A549 (cell line): ENCODE measurements at regions of chr19 and their contacts with region 1.

Region 1: GRCh38 chr19:4831304-4831978 is at the start of gene TICAM1:
- DNase-seq: peak; percentile 48 to 58
- ATAC-seq: peak; percentile 87 to 90
- H3K4me3 ChIP-seq: peak within 1 kb of the TSS; percentile 81
- H3K27ac ChIP-seq: peak within 1 kb of the TSS; percentile 89 to 95
- H3K4me1 ChIP-seq: peaks cover 19% of the 10 kb centered on the region
- CTCF ChIP-seq: no peak
- EP300 ChIP-seq: no peak
- POLR2A ChIP-seq: peak; percentile 67
- RAD21 ChIP-seq: no peak
- polyA plus RNA-seq, gene TICAM1: 0.78 and 2.0 TPM in 2 replicates

Region 2: DNA sequence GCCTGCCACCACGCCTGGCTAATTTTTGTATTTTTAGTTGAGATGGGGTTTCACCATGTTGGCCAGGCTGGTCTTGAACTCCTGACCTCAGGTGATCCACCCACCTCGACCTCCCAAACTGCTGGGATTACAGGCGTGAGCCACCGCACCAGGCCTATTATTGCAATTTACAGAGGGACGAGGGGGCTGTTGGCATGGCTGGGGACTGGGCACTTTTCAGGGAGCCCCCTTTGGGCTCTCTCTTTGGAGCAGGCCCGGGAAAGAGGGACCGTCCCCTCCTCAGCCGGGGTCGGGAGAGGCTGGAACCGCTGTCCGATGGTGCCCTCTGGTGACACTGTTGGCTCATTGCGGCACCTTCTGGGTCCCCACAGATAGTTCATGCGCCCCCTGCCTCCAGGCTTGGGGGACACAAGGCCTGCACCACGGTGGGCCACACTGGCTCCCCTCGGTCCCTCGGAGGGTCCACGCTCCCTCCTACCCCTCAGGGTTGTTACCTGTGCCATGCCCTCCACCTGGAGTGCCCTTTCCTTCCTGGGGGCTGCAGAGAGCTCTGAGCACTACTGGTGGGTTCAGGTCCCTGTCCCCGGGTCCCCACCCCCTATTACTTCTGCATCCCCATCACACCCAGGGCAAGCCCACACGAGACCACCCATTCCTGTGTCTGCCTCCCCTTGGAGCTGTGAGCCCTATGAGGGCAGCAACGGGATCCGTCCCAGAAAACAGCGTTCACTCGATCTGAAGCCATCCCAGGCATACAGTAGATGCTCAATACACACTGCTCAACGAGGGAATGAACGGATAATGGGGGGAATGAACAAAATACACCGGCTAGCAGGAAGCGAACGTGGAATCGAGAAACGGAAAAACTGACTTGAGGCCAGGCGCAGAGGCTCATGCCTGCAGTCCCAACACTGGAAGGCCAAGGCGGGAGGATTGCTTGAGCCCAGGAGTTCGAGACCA is 27.4 kb before region 1 on chr19:
- CTCF ChIA-PET with region 1: interaction called, 15 read pairs
- POLR2A ChIA-PET with region 1: no interaction called
- DNase-seq: peak; percentile 47 to 52
- ATAC-seq: peak; percentile 88 to 93
- H3K4me3 ChIP-seq: no peak overlapping the region
- H3K27ac ChIP-seq: no peak overlapping the region
- H3K4me1 ChIP-seq: no peaks in the 10 kb centered on the region
- CTCF ChIP-seq: peak; percentile 67
- EP300 ChIP-seq: no peak
- POLR2A ChIP-seq: no peak
- RAD21 ChIP-seq: peak; percentile 69 to 80